GM12878 (cell line): ENCODE measurements at regions of chr19 and their contacts with region 1.

Region 1: GRCh38 chr19:14277608-14278007 is 71.6 kb upstream of the ADGRL1 start:
- DNase-seq: no peak
- ATAC-seq: no peak
- H3K4me3 ChIP-seq: no peak overlapping the region
- H3K27ac ChIP-seq: no peak overlapping the region
- H3K4me1 ChIP-seq: no peaks in the 10 kb centered on the region
- H3K27me3 ChIP-seq: no peaks in the 10 kb centered on the region
- CTCF ChIP-seq: no peak
- EP300 ChIP-seq: no peak
- POLR2A ChIP-seq: no peak
- RAD21 ChIP-seq: no peak

Region 2: DNA sequence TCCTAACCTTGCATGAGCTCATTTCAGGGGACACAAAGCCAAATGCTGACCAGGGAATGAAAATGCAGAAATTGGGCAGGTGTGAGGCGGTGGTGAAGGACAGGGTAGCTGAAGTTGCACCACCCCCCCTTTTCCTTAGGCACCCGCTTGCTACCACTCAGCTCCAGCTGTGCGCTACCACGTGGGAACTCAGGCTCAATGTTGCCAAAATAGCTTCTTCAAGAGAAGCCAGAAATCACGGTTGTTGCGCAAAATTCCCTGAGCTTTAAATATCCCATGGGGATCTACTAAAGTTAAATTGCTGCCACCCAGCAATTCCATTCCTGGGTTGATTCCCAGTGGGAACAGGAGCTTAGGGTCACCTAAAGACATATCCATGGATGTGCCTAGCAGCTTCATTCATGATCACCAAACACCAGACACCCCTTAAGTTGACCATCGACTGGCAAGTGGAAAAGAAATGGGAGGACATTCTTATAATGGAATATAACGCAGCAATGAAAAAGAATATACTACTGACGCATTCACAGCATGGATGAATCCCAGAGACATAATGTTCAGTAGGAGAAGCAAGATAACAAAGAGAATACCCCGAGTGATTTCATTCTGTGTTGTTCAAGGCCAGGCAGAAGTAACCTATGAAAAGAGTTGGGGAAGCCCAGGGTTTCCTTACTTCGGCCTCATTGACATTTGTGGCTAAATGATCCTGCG is 58.8 kb before region 1 on chr19:
- CTCF ChIA-PET with region 1: interaction called, 3 read pairs
- POLR2A ChIA-PET with region 1: no interaction called
- RAD21 ChIA-PET with region 1: no interaction called
- SMC1A ChIA-PET with region 1: no interaction called
- in situ Hi-C with region 1: no loop called
- intact Hi-C with region 1: loop called (anchors 10 kb)
- DNase-seq: no peak
- ATAC-seq: no peak
- H3K4me3 ChIP-seq: no peak overlapping the region
- H3K27ac ChIP-seq: no peak overlapping the region
- H3K4me1 ChIP-seq: no peaks in the 10 kb centered on the region
- H3K27me3 ChIP-seq: no peaks in the 10 kb centered on the region
- CTCF ChIP-seq: no peak
- EP300 ChIP-seq: no peak
- POLR2A ChIP-seq: no peak
- RAD21 ChIP-seq: no peak